ENCODE measurements at regions of chr1 and their contacts with region 1.

Region 1: GRCh38 chr1:27097484-27097917 is 57.4 kb downstream of the SLC9A1 start:
- DNase-seq: peak; percentile 12
- H3K4me3 ChIP-seq: no peak overlapping the region
- CTCF ChIP-seq: peak; percentile 97

Region 2: GRCh38 chr1:26961826-26962225 is 135.7 kb before region 1 on chr1:
- CTCF ChIA-PET with region 1: interaction called, 115 read pairs
- POLR2A ChIA-PET with region 1: no interaction called
- DNase-seq: peak; percentile 81
- H3K4me3 ChIP-seq: no peak overlapping the region
- CTCF ChIP-seq: no peak

Region 3: GRCh38 chr1:26993237-26994019 is 104.1 kb before region 1 on chr1 and contains the start of gene TRNP1:
- CTCF ChIA-PET with region 1: interaction called, 121 read pairs
- POLR2A ChIA-PET with region 1: interaction called, 4 read pairs
- DNase-seq: no peak
- H3K4me3 ChIP-seq: peak within 1 kb of the TSS; percentile 75
- CTCF ChIP-seq: no peak

Region 4: DNA sequence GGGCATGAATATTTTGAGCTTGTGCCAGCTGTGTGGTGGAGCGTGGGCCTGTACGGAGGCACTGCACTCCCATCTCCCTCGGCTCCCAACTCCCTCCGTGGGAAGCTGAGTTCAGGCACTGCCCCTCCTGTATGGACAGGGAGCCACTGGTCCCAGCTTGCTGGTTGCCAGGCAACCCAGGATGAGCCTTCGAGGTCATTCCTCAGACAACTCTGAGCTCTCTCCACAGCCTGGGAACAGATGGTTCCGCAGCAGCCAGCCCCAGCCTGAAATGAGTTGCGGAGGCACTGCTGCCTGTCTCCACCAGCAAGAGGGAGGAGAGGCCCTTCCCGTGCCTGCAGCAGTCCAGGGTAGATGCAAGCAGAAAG is 26.5 kb before region 1 on chr1:
- CTCF ChIA-PET with region 1: interaction called, 19 read pairs
- POLR2A ChIA-PET with region 1: no interaction called
- DNase-seq: peak; percentile 10
- H3K4me3 ChIP-seq: no peak overlapping the region
- CTCF ChIP-seq: no peak

Region 5: GRCh38 chr1:27077968-27078367 is 19.5 kb before region 1 on chr1:
- CTCF ChIA-PET with region 1: interaction called, 11 read pairs
- POLR2A ChIA-PET with region 1: no interaction called
- DNase-seq: no peak
- H3K4me3 ChIP-seq: no peak overlapping the region
- CTCF ChIP-seq: no peak

Region 6: DNA sequence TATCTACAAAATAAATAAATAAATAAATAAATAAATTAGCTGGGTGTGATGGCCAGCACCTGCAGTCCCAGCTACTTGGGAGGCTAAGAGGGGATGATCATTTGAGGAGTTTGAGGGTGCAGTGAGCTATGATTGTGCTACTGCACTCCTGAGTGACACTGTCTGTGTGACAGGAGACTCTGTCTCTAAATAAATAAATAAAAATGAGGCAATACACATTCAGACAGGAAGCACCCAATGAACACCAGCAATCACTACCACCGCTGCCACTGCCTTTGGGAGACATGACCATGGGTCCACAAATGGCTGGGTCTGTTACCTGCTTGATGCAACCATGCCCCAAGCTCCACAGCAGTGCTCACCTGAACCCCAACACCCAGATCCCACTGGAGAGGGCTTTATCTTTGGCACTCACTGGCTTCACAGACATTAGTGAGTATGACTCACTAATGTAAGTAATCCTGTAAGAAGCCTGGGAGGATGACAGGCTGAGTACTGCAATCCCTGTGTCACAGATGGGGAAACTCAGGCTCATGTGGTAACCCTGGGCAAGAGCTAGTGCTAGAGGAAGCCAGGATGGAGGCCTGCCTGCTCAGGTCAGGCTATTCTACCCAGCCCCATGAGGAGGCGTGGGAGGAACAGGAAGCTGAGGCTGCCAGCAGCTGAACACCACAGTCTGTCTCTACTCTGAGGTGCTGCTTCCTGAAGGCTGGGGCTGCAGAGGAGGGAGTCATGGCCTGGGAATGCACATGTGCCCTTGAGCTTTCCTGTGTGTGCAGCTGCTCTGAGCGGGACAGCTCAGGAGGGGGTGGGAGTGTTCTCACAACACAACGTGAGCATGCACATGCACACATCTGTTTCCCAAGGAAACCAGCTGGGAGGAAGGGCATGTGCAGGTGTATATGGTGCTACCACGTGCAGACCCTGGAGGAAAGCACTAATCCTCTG is 14.4 kb after region 1 on chr1:
- CTCF ChIA-PET with region 1: interaction called, 44 read pairs
- POLR2A ChIA-PET with region 1: no interaction called
- DNase-seq: peak; percentile 98
- H3K4me3 ChIP-seq: no peak overlapping the region
- CTCF ChIP-seq: peak; percentile 72

Region 7: DNA sequence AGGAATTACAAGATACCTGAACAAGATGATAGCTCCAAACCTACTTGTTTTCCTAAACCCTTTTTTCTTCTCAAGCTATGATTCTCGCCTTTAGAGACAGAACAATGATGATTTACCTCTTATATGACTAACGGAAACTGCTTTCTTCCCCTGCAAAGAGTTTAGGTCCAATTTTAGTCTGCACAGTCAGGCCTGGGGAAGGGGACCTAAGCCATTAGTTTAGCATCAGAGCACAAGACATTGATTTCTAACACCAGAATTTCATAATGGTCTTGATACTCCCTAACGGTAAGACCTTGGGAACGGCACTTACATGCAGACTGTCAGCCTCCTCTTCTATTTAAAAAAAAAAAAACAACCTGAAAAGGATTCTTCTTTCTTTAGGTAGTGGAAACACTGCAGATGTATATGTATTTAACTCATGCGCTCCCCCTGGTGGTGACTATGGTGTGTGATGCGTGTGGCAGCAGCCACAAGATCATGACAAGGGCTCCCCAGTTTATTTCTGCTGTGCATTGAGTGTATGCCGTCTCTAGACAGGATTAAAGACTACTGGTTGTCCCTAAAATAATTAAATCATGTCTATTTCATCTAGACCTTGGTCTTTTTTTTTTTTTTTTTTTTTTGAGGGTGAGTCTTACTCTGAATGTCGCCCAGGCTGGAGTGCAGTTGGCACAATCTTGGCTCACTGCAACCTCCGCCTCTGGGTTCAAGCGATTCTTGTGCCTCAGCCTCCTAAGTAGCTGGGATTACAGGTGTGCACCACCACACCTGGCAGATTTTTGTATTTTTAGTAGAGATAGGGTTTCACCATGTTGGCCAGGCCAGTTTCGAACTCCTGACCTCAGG is 187.1 kb after region 1 on chr1:
- CTCF ChIA-PET with region 1: interaction called, 408 read pairs
- POLR2A ChIA-PET with region 1: no interaction called
- DNase-seq: no peak
- H3K4me3 ChIP-seq: no peak overlapping the region
- CTCF ChIP-seq: peak; percentile 73

Region 8: GRCh38 chr1:27632387-27633297 is 535.1 kb after region 1 on chr1:
- CTCF ChIA-PET with region 1: no interaction called
- POLR2A ChIA-PET with region 1: no interaction called
- DNase-seq: no peak
- H3K4me3 ChIP-seq: no peak overlapping the region
- CTCF ChIP-seq: no peak

Measured in AG04449 (cell line).